ENCODE measurements at regions of chr15 and their contacts with region 1.

Region 1: DNA sequence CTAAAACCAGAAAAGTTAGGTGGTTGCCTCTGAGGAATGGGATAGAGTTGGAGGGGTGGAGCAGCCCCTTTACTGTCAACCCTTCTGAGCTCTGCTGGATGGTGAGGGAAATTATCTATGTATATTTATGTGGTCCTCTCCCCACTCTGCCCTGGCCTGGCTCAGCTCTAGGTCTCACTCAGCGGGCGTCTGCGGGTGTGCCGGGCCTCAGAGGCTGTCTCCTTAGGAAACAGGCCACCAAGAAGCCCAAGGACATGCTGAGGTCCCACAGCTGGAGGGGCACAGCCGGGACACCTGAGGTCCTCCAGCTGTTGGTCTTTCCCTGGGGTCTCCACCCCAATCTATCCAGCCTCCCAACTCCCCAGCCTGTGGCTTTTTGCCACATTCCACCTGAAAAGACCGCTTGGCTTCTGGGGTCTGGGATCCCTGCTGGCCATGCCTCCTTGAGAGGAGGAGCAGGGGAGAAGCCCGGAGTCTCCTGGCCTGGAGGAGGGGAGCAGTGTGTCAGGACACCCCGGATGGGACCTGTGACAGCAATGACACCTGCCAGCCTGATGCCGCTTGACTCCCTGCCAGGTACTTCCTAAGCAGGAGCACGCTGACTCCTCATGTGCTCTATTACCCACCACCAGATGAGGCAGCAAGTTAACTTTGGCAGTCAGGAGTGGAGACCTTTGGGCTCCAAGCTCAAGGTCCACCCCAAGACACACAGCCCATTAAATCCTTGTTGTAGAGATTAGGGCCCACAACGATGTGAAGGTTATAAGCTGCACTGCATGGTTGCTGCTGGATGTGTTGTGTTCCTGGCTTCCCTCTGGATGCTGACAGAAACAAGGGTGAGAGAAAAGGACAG is at the start of gene SLC28A1:
- DNase-seq: no peak
- ATAC-seq: no peak
- H3K4me3 Mint-ChIP-seq: no peak within 1 kb of the TSS
- H3K27ac Mint-ChIP-seq: peak within 1 kb of the TSS; percentile 1; the same call in 1 of the 2 replicates
- H3K4me1 Mint-ChIP-seq: peaks cover 6% of the 10 kb centered on the region
- H3K27me3 Mint-ChIP-seq: no peaks in the 10 kb centered on the region
- CTCF ChIP-seq: no peak
- total RNA-seq, gene SLC28A1: 0.14 to 0.16 TPM in 2 of 3 replicates, not detected in the other

Region 2: DNA sequence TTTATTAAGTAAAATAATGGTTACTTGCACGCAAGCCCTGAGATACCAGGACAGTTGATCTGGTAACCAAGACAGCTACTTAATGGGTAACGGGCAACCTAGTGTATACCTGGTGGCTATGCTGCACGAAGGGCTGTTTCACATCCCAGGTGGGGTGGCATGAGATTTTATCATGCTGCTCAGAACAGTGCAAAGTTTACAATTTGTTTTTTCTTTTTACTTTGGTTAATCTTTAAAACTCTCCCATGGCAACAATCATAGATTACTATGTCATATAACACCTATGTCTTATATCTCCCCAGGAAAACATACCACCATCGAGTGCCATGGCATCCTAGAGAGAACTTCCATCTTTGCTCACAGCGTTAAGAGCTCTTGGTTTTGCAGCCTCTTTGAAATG is 31.9 kb before region 1 on chr15:
- CTCF ChIA-PET with region 1: no interaction called
- POLR2A ChIA-PET with region 1: no interaction called
- DNase-seq: no peak
- ATAC-seq: no peak
- H3K4me3 Mint-ChIP-seq: no peak overlapping the region
- H3K27ac Mint-ChIP-seq: no peak overlapping the region
- H3K4me1 Mint-ChIP-seq: no peaks in the 10 kb centered on the region
- H3K27me3 Mint-ChIP-seq: no peaks in the 10 kb centered on the region
- CTCF ChIP-seq: no peak

Region 3: GRCh38 chr15:84908564-84908963 is 24.4 kb after region 1 on chr15:
- CTCF ChIA-PET with region 1: interaction called, 13 read pairs
- POLR2A ChIA-PET with region 1: no interaction called
- DNase-seq: no peak
- ATAC-seq: peak; percentile 64
- H3K4me3 Mint-ChIP-seq: no peak overlapping the region
- H3K27ac Mint-ChIP-seq: no peak overlapping the region
- H3K4me1 Mint-ChIP-seq: peaks cover 8% of the 10 kb centered on the region
- H3K27me3 Mint-ChIP-seq: no peaks in the 10 kb centered on the region
- CTCF ChIP-seq: no peak

Measured in WTC11 (cell line).